ENCODE measurements at regions of chr2 and their contacts with region 1.

Region 1: GRCh38 chr2:216412022-216412999 is at the start of gene SMARCAL1:
- DNase-seq: peak; percentile 100
- H3K4me3 Mint-ChIP-seq: peak within 1 kb of the TSS; percentile 92
- H3K27ac Mint-ChIP-seq: peak within 1 kb of the TSS; percentile 90
- H3K4me1 Mint-ChIP-seq: peaks cover 6% of the 10 kb centered on the region
- H3K27me3 Mint-ChIP-seq: no peaks in the 10 kb centered on the region
- total RNA-seq, gene SMARCAL1: 17.0 to 18.2 TPM

Region 2: DNA sequence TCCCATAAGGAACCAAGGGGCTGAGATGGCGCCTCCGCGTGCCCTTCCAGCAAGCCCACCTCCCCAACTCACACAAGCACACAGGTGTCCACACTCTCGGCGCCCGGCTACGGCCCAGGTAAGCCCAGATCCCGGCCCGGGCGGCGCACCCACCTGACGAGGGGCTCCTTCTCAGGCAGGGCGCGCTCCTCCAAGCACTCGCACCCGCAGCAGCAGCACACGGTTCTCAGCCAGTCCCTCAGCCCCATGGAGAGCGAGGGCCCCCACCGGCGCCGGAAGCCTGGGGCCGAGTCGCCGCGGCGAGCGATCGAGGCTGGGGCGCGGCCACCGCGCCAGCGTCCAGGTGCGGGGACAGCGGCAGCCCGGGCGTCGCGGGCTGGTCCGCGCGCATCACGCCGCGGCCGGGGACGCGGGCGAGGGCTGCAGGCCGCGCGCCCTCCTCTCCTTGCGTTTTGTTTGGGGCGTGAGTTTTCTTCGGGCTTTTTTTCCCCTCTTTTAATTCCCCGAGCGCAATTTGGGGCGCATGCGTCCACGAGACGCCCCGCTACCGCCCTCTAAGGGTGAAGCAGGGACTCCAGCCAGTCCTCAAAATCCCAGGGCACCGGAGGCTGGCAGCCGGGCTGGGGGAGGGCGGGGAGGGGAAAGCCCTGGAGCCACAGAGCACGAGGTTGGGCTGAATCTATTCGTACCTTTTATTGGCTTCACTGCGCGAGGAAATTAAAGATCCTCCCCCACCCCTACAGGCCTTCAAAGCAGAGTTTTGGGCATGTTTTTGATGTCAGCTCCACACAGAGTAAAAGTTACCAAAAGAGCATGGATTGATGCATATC is 399.0 kb before region 1 on chr2 and contains the start of gene MREG:
- CTCF ChIA-PET with region 1: no interaction called
- intact Hi-C with region 1: loop called (anchors 1 kb)
- DNase-seq: peak; percentile 91
- H3K4me3 Mint-ChIP-seq: peak within 1 kb of the TSS; percentile 81
- H3K27ac Mint-ChIP-seq: no peak within 1 kb of the TSS
- H3K4me1 Mint-ChIP-seq: peaks cover 51% of the 10 kb centered on the region
- H3K27me3 Mint-ChIP-seq: no peaks in the 10 kb centered on the region
- total RNA-seq, gene MREG: 3.1 to 3.9 TPM

Region 3: DNA sequence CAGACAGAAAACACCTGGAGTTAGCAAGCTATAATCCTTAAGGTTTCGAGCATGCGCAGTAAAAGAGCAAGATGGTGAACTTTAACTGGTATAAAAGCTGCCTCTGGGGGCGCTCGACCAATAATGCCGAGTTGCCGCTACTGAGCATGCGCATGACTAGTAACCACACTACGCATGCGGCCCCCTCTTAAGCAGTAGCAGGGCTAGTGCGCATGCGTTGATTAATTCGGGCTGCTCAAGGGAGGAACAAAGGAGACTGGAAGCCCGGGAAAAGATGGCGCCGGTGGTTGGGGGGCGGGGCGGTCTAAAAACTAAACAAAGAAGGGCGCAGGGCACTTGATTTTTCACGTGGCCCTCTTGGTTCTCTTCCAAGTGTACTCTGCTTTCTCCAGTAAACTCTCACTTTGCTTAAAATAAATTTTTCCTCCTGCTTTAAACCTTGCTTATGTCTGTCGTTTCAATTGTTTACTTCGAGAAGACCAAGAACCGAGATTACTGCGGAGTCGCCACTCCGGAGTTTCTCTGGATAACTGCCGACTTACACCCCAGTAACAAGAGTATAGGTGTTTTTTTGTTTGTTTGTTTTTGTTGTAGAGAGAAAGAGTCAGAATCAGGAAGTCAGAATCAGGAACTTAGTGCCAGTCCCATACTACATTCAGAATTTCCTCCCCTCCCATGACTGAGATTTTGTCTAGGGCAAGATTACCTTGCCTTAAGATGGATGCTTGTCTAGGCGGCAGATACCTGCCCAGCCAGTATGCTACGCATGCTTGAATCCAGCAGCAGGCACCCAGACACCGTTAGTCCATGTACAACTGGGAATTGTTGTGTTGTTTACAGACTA is 297.4 kb before region 1 on chr2:
- CTCF ChIA-PET with region 1: interaction called, 7 read pairs
- intact Hi-C with region 1: loop called (anchors 1 kb)
- DNase-seq: peak; percentile 99
- H3K4me3 Mint-ChIP-seq: peak overlapping the region; percentile 89
- H3K27ac Mint-ChIP-seq: peak overlapping the region; percentile 99
- H3K4me1 Mint-ChIP-seq: peaks cover 91% of the 10 kb centered on the region
- H3K27me3 Mint-ChIP-seq: no peaks in the 10 kb centered on the region

Region 4: GRCh38 chr2:216478151-216478550 is 65.8 kb after region 1 on chr2:
- CTCF ChIA-PET with region 1: no interaction called
- intact Hi-C with region 1: loop called (anchors 1 kb)
- DNase-seq: peak; percentile 68
- H3K4me3 Mint-ChIP-seq: no peak overlapping the region
- H3K27ac Mint-ChIP-seq: no peak overlapping the region
- H3K4me1 Mint-ChIP-seq: peaks cover 23% of the 10 kb centered on the region
- H3K27me3 Mint-ChIP-seq: no peaks in the 10 kb centered on the region

Region 5: DNA sequence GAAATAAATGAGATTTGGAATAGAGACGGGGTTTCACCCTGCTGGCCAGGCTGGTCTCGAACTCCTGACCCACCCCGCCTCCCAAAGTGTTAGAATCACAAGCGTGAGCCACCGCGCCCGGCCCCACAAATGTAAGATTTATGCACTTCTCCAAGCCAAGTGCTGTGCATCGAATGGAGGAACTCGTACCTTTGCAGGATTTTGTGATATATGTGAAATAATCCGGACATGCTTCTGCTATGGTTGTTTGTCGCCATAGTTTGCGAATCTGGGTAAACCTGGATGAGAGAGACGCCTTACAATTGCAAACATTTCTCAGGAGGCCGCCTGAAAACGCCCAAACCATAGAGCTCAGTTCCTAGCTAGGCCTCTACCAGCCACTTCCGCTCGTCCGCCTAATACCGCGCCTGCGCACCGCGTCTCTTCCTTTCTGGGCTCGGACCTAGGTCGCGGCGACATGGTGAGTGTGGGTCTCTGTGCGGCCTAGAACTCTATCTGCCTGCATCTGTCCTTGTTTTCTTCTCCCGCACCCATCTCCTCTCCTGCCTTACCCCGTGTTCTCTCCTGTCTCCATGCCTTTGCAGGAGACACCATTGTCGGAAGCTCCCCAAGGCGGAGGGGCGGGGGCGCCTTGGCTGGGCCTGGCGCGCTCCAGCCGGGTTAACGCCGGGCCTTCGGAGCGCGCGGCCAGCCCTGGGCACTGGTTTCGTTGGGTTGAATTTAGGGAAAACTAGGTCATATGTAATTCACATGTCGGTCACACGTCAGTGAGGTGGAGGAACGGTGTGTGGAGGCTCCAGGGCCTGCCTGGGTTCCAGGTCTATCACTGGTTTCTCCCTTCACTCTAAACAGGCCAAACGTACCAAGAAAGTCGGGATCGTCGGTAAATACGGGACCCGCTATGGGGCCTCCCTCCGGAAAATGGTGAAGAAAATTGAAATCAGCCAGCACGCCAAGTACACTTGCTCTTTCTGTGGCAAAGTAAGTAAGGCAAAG is 86.4 kb after region 1 on chr2 and contains the start of gene RPL37A:
- CTCF ChIA-PET with region 1: interaction called, 3 read pairs
- intact Hi-C with region 1: loop called (anchors 1 kb)
- DNase-seq: peak; percentile 93
- H3K4me3 Mint-ChIP-seq: peak within 1 kb of the TSS; percentile 94
- H3K27ac Mint-ChIP-seq: peak within 1 kb of the TSS; percentile 94
- H3K4me1 Mint-ChIP-seq: peaks cover 51% of the 10 kb centered on the region
- H3K27me3 Mint-ChIP-seq: no peaks in the 10 kb centered on the region
- total RNA-seq, gene RPL37A: 4,869 to 4,871 TPM

Measured in activated naive CD4-positive, alpha-beta T cell treated with anti-CD3 and anti-CD28 coated beads for 36 hours (primary cell).